ENCODE measurements at regions of chr3 and their contacts with region 1.

Region 1: GRCh38 chr3:43215663-43216275 is 70.6 kb upstream of the SNRK start:
- DNase-seq: no peak
- H3K4me3 Mint-ChIP-seq: no peak overlapping the region
- H3K27ac Mint-ChIP-seq: no peak overlapping the region
- H3K4me1 Mint-ChIP-seq: peaks cover 20% of the 10 kb centered on the region
- H3K27me3 Mint-ChIP-seq: no peaks in the 10 kb centered on the region
- CTCF ChIP-seq: no peak

Region 2: GRCh38 chr3:42179110-42179725 is 1036.6 kb before region 1 on chr3:
- CTCF ChIA-PET with region 1: no interaction called
- POLR2A ChIA-PET with region 1: no interaction called
- intact Hi-C with region 1: no loop called
- DNase-seq: peak; percentile 94
- H3K4me3 Mint-ChIP-seq: no peak overlapping the region
- H3K27ac Mint-ChIP-seq: peak overlapping the region; percentile 85
- H3K4me1 Mint-ChIP-seq: peaks cover 9% of the 10 kb centered on the region
- H3K27me3 Mint-ChIP-seq: no peaks in the 10 kb centered on the region
- CTCF ChIP-seq: no peak

Region 3: GRCh38 chr3:43004282-43004681 is 211.5 kb before region 1 on chr3:
- CTCF ChIA-PET with region 1: no interaction called
- POLR2A ChIA-PET with region 1: no interaction called
- intact Hi-C with region 1: no loop called
- DNase-seq: peak; percentile 48
- H3K4me3 Mint-ChIP-seq: no peak overlapping the region
- H3K27ac Mint-ChIP-seq: no peak overlapping the region
- H3K4me1 Mint-ChIP-seq: peaks cover 52% of the 10 kb centered on the region
- H3K27me3 Mint-ChIP-seq: no peaks in the 10 kb centered on the region
- CTCF ChIP-seq: no peak

Region 4: DNA sequence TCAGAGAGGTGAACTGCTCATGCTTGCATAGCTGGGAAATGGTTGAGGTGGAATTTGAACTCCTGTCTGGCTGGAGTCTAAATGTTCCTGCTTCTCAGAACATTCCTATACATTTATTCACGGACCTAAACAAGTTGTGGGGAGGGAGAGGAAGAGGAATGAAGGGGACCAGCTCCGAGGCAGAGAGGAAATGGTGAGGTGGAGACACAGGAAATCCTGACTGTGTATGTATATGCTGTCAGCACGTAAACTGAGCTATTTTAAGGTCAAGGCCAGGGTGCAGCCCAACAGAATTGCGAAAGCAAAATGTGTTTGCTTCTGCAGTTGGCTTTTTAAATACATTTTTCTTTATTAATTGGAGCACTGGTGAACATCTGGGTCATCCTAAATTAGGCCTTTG is 35.7 kb before region 1 on chr3:
- CTCF ChIA-PET with region 1: interaction called, 4 read pairs
- POLR2A ChIA-PET with region 1: interaction called, 24 read pairs
- intact Hi-C with region 1: no loop called
- DNase-seq: peak; percentile 85
- H3K4me3 Mint-ChIP-seq: peak overlapping the region; percentile 44
- H3K27ac Mint-ChIP-seq: peak overlapping the region; percentile 61
- H3K4me1 Mint-ChIP-seq: peaks cover 45% of the 10 kb centered on the region
- H3K27me3 Mint-ChIP-seq: no peaks in the 10 kb centered on the region
- CTCF ChIP-seq: no peak

Measured in MCF 10A (cell line).